ENCODE measurements at regions of chr2 and their contacts with region 1.

Region 1: DNA sequence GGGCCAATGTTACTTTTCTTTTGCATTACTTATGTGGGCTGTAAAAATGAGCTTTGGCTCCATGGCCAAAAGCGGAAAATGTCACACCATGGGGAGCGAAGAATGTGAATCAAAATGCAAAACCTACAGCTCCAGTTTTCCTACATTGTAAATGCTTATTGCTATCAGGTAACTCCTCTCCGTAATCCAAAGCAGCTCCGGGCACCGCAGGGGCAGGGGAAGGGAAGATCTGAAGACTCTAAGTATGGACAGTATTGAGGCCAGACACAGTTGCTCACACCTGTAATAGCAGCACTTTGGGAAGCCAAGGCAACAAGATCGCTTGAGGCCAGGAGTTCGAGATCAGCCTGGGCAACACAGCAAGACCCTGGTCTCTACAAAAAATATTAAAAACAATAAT is 7.1 kb upstream of the AGFG1 start:
- DNase-seq: no peak
- H3K4me3 ChIP-seq: no peak overlapping the region
- H3K27ac ChIP-seq: no peak overlapping the region
- H3K4me1 ChIP-seq: peaks cover 11% of the 10 kb centered on the region
- H3K27me3 ChIP-seq: no peaks in the 10 kb centered on the region
- CTCF ChIP-seq: no peak

Region 2: GRCh38 chr2:226185616-226186211 is 1279.1 kb before region 1 on chr2:
- CTCF ChIA-PET with region 1: no interaction called
- POLR2A ChIA-PET with region 1: no interaction called
- intact Hi-C with region 1: no loop called
- DNase-seq: peak; percentile 87
- H3K4me3 ChIP-seq: peak overlapping the region; percentile 6
- H3K27ac ChIP-seq: peak overlapping the region; percentile 84
- H3K4me1 ChIP-seq: peaks cover 40% of the 10 kb centered on the region
- H3K27me3 ChIP-seq: no peaks in the 10 kb centered on the region
- CTCF ChIP-seq: no peak

Region 3: GRCh38 chr2:227267410-227268148 is 197.3 kb before region 1 on chr2:
- CTCF ChIA-PET with region 1: no interaction called
- POLR2A ChIA-PET with region 1: no interaction called
- intact Hi-C with region 1: no loop called
- DNase-seq: no peak
- H3K4me3 ChIP-seq: no peak overlapping the region
- H3K27ac ChIP-seq: no peak overlapping the region
- H3K4me1 ChIP-seq: no peaks in the 10 kb centered on the region
- H3K27me3 ChIP-seq: no peaks in the 10 kb centered on the region
- CTCF ChIP-seq: no peak

Region 4: DNA sequence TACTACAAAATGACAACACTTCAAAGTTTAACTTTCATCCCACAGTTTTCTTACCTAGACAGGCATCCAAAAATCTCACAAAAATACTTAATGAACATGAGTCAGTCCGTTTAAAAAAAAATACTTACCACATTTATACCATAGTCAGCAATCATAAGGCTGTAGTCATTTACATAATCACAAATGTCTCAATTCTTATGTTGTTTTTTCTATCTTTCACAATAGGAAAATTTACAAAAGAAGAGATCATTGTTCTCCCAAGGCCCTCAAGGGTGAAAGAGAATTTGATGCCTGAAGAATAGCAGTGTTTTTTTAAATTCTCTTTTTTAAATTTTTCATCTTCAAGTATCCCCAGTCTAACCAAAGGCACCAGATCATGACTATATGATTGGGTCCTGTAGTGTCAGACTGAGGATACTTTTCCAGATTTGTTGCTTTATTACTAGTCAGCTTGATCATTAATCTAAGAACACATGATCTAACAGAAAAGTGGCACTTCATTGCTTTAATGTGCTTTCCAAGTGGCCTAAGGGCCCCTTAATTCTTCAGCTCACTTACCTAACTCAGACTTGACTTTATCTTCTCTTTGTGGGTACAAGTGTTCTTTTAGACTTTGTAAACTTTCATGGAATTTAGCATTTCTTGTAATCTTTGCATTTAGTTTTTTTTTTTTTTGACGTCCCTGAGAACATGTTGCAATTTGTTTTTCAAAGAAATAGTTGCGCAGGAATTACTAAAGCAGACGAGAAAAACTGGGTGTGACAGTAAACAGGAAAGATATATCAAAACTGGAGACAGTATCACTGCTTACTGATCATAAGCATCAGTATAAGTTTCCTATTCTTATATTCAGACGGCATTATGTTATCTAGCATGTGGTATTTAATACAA is 206.6 kb after region 1 on chr2:
- CTCF ChIA-PET with region 1: no interaction called
- POLR2A ChIA-PET with region 1: interaction called, 10 read pairs
- intact Hi-C with region 1: no loop called
- DNase-seq: no peak
- H3K4me3 ChIP-seq: no peak overlapping the region
- H3K27ac ChIP-seq: no peak overlapping the region
- H3K4me1 ChIP-seq: no peaks in the 10 kb centered on the region
- H3K27me3 ChIP-seq: no peaks in the 10 kb centered on the region
- CTCF ChIP-seq: no peak